Right lobe of liver (tissue), 6 donors: ENCODE measurements at regions of chr19 and their contacts with region 1.

Region 1: GRCh38 chr19:33235269-33235995 is 9.8 kb upstream of the SLC7A10 start:
- DNase-seq: peak; percentile 86 to 89 (median 88)
- ATAC-seq: peak; percentile 86 to 94 (median 90)
- H3K4me3 ChIP-seq: no peak overlapping the region
- H3K27ac ChIP-seq: peak overlapping the region in 2 of 3 donors; percentile 29 to 33
- H3K4me1 ChIP-seq: peaks cover 0 to 8% (median 0%) of the 10 kb centered on the region in 4 donors
- H3K27me3 ChIP-seq: no peaks in the 10 kb centered on the region
- CTCF ChIP-seq: peak; percentile 92 to 95 (median 93)
- POLR2A ChIP-seq: no peak

Region 2: GRCh38 chr19:33193865-33194362 is 41.5 kb before region 1 on chr19 and contains the start of gene LRP3:
- intact Hi-C with region 1: no loop called
- DNase-seq: peak in 2 of 3 donors; percentile 75 to 81
- ATAC-seq: peak; percentile 60 to 78 (median 68)
- H3K4me3 ChIP-seq: peak within 1 kb of the TSS; percentile 67 to 70 (median 69)
- H3K27ac ChIP-seq: peak within 1 kb of the TSS in 2 of 3 donors; percentile 31 to 68
- H3K4me1 ChIP-seq: peaks cover 0 to 6% (median 0%) of the 10 kb centered on the region in 4 donors
- H3K27me3 ChIP-seq: no peaks in the 10 kb centered on the region
- CTCF ChIP-seq: no peak
- POLR2A ChIP-seq: no peak
- total RNA-seq, gene LRP3: 25.2 to 40.7 (median 33.7) TPM

Region 3: DNA sequence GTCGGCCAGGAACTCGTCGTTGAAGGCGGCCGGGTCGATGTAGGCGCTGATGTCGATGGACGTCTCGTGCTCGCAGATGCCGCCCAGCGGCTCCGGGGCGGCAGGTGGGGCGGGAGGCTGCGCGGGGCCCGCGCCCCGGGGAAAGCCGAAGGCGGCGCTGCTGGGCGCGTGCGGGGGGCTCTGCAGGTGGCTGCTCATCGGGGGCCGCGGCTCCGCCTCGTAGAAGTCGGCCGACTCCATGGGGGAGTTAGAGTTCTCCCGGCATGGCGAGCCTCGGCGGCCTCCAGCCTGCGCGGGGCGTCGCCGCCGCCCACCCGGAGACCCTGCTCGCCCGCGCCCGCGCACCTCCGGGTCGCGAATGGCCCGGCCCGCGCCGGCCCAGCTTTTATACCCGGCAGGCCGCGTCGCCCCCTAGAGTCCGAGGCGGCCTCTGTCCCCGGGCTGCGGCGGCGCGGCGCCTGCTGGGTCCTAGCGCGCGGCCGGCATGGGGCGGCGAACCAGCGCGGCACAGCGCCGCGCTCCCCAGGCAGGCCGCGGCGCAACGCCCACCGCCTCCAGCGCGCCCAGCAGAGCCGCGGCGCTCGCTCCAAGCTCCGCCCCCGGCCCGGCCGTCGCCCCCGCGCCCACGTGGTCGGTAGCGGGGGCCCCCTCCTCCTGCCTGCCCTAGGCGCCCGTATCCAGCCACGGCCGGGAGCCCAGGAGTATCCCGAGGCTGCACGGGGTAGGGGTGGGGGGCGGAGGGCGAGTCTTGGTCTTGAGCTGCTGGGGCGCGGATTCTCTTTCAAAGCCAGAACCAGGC is 66.9 kb after region 1 on chr19 and contains the start of gene CEBPA:
- intact Hi-C with region 1: loop called (anchors 5 to 10 kb)
- DNase-seq: peak; percentile 89 to 94 (median 93)
- ATAC-seq: peak; percentile 55 to 77 (median 64)
- H3K4me3 ChIP-seq: peak within 1 kb of the TSS; percentile 86 to 96 (median 93)
- H3K27ac ChIP-seq: peak within 1 kb of the TSS; percentile 94 to 99 (median 95)
- H3K4me1 ChIP-seq: peaks cover 0 to 53% (median 8%) of the 10 kb centered on the region in 4 donors
- H3K27me3 ChIP-seq: no peaks in the 10 kb centered on the region
- CTCF ChIP-seq: peak; percentile 35 to 88 (median 52)
- POLR2A ChIP-seq: peak; percentile 100
- total RNA-seq, gene CEBPA: 53.9 to 163 (median 119) TPM

Region 4: DNA sequence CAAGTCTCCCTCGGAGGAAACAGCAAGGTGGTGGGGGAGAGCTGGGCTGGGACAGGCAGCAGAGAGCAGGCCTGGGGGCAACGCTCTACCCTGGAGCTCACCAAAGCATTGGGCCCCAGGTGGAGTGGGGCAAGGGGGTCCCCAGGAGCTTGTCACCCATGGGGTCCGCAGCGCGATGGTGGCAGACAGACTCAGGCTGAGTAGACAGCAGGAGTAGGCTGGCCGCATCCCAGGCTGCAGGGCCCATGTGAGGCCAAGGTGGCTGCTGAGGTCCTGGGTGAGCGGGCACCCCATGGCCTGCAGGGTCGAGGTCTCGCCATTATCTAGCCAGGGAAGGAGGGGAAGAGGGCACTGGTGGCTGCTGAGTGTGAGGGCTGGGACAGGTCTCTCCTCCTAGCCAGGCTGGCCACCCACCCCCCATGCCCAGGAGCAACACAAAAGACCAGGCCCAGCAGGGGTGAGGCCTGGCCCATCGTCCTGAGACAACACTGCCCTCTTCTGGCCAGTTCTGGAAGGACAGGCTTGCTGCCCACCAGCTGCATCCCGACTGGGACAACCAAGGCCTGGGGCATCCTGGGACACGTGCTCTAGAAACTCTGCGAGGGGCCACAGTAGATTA is 171.2 kb after region 1 on chr19:
- intact Hi-C with region 1: loop called (anchors 2 to 5 kb)
- DNase-seq: peak in 2 of 3 donors; percentile 73 to 85
- ATAC-seq: peak; percentile 47 to 54 (median 50)
- H3K4me3 ChIP-seq: no peak overlapping the region
- H3K27ac ChIP-seq: peak overlapping the region; percentile 82 to 99 (median 96)
- H3K4me1 ChIP-seq: peaks cover 0 to 52% (median 28%) of the 10 kb centered on the region in 4 donors
- H3K27me3 ChIP-seq: no peaks in the 10 kb centered on the region
- CTCF ChIP-seq: peak; percentile 89 to 97 (median 94)
- POLR2A ChIP-seq: no peak

Region 5: DNA sequence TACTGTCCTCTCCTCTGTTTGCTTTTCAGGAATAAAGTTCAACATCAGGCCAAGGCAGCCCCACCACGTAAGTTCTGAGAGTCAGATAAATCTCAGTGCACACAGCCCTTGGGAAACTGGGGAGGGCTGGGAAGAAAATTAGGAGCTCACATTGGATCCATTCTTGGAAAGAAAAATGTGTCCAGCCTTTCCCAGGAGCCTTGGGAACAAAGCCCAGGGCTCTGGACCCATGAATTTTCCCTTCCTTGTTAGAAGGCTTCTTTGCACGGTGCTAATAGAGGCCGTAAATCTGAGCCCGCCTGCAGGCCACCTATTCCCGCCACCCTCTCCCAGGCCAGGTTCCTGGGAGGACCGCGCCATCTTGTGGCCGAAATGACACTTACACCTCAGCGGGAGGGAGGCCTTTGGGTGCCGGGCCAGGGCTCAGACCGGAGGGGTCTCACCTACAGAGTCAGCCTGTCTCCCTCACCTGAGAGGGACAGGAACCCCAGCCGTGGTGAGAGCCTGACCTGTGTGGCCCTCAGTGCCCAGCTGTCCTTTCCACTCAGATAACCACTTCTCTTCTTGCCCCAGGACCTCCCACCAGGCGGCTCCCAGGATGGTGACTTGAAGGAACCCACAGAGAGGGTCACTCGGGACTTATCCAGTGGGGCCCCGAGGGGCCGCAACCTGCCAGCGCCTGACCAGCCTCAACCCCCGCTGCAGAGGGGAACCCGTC is 536.1 kb after region 1 on chr19:
- intact Hi-C with region 1: loop called (anchors 5 kb)
- DNase-seq: peak; percentile 79 to 80 (median 79)
- ATAC-seq: peak; percentile 79 to 94 (median 90)
- H3K4me3 ChIP-seq: no peak overlapping the region
- H3K27ac ChIP-seq: no peak overlapping the region
- H3K4me1 ChIP-seq: no peaks in the 10 kb centered on the region
- H3K27me3 ChIP-seq: no peaks in the 10 kb centered on the region
- CTCF ChIP-seq: peak; percentile 89 to 91 (median 90)
- POLR2A ChIP-seq: no peak